Astrocyte of the cerebellum (primary cell): ENCODE measurements at regions of chr2 and their contacts with region 1.

Region 1: GRCh38 chr2:70647873-70648481 is 94.4 kb upstream of the TGFA start:
- DNase-seq: peak; percentile 29
- H3K4me3 ChIP-seq: no peak overlapping the region
- CTCF ChIP-seq: peak; percentile 100

Region 2: DNA sequence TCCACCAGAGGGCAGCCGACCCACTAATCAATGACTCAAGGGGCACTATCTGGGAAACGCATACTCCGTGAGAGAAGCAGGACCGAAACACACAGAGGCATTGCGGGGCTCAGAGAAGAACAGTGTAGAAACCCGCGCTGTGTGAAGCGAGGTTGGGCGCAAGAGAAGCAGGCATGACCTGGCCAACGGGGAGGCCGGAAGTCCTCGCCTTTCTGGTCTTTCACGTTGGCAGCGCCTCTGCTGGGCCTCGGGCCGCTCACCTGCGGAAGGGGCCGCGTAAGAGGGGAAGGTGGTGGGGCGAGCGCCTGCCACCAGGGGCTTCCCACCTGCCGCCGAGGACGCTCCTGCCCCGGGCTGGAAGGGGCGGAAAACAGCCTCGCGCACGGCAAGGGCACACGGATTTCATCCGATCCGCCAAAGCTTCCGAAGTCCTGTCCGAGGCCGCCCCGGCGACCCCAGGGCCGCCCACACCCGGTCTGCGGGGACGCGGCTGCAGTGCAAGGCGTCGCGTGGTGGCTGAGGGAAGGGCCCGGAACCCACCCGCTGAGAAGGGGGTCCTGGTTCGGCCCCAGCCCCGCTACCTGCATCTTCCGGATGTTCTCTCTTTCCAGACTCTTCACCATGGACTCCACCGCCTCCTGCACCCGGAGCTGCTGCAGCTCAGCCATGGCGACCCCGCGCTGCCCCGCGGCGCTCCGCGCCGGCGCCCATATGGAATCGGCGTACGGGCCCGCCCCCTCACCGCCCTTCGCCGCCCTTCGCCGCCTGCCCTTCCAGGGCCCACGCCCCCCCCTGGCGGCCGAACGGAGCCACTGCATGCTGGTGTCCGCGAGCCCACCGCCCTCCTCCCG is 346.4 kb before region 1 on chr2 and contains the start of gene FAM136A:
- in situ Hi-C with region 1: loop called (anchors 25 kb)
- DNase-seq: peak; percentile 24
- H3K4me3 ChIP-seq: peak within 1 kb of the TSS; percentile 70
- CTCF ChIP-seq: peak; percentile 89

Region 3: GRCh38 chr2:70748002-70748784 is 100.2 kb after region 1 on chr2:
- in situ Hi-C with region 1: no loop called
- DNase-seq: no peak
- H3K4me3 ChIP-seq: no peak overlapping the region
- CTCF ChIP-seq: no peak